Caco-2 (cell line): ENCODE measurements at regions of chr6 and their contacts with region 1.

Region 1: DNA sequence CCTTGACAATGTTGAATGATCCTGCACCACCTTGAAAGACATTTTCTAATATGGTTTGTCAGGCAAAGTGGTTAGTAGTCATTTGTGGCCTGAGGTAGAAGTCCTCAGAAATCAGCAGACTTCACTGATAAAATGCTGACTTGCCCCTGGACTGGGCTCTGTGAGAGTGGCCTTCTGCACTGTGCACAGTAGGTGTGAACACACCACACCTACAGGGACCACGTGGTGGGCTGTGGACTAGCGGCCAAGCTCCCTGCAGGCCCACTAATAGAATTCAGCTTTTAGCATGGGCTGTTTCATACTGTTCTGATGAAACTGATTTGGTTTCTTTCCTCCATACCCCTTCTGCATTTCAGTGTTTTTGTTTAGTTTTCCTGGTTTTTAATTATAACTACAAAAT is 7.3 kb downstream of the BPHL start:
- DNase-seq: no peak
- H3K4me3 ChIP-seq: no peak overlapping the region
- H3K4me3 Mint-ChIP-seq: no peak overlapping the region
- H3K27ac Mint-ChIP-seq: no peak overlapping the region
- H3K4me1 ChIP-seq: peaks cover under 1% of the 10 kb centered on the region; the same call in 1 of the 2 replicates
- H3K4me1 Mint-ChIP-seq: no peaks in the 10 kb centered on the region
- H3K27me3 ChIP-seq: no peaks in the 10 kb centered on the region
- H3K27me3 Mint-ChIP-seq: no peaks in the 10 kb centered on the region
- CTCF ChIP-seq: no peak

Region 2: DNA sequence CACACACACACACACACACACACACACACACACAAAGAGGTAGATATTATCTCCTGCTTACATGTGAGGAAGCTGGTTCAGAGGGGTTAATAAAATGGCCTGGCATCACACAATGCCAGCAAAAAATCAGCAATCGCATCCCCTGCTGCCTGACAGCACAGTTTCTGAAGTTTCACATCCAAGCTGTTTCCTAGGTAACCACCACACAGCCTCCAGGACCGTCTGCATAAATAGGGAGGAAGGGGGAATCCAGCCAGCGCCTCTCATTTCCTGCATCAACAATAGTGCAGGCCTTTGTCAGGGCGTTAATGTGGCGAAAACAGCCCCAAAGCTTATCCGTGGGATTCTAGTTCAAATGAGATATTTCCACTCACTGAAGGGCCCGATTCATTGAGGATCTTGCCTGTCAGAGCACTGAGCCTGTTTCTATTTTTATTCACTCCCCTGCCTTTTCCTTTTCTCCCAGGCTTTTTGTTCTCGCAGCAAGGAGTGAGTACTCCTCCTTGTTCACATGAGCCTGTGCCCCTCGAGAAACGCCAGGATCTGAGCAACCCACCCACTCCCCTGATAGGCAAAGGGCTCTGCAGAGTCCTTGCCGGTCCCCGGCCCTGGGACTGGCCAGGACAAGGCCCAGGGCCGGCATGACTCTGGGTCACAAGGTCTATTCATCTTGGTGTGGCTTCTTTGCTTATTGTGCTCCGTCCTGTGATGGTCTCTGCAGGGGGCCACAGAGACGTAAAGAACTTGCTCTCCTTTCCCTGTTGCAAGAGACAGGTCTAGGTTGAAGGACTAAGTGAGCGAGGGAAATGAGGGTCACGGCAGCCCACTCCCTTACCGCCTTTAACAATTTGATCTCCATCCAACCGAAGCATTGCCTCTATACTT is 69.0 kb after region 1 on chr6:
- CTCF ChIA-PET with region 1: interaction called, 3 read pairs
- POLR2A ChIA-PET with region 1: no interaction called
- intact Hi-C with region 1: loop called (anchors 1 kb)
- DNase-seq: no peak
- H3K4me3 ChIP-seq: no peak overlapping the region
- H3K4me3 Mint-ChIP-seq: no peak overlapping the region
- H3K27ac Mint-ChIP-seq: no peak overlapping the region
- H3K4me1 ChIP-seq: no peaks in the 10 kb centered on the region
- H3K4me1 Mint-ChIP-seq: no peaks in the 10 kb centered on the region
- H3K27me3 ChIP-seq: no peaks in the 10 kb centered on the region
- H3K27me3 Mint-ChIP-seq: no peaks in the 10 kb centered on the region
- CTCF ChIP-seq: no peak

Region 3: GRCh38 chr6:3239110-3239830 is 113.5 kb after region 1 on chr6:
- CTCF ChIA-PET with region 1: no interaction called
- POLR2A ChIA-PET with region 1: no interaction called
- intact Hi-C with region 1: loop called (anchors 5 kb)
- DNase-seq: peak in 1 of 2 experiments; percentile 57
- H3K4me3 ChIP-seq: no peak overlapping the region
- H3K4me3 Mint-ChIP-seq: no peak overlapping the region
- H3K27ac Mint-ChIP-seq: no peak overlapping the region
- H3K4me1 ChIP-seq: no peaks in the 10 kb centered on the region
- H3K4me1 Mint-ChIP-seq: no peaks in the 10 kb centered on the region
- H3K27me3 ChIP-seq: no peaks in the 10 kb centered on the region
- H3K27me3 Mint-ChIP-seq: no peaks in the 10 kb centered on the region
- CTCF ChIP-seq: peak; percentile 53 to 55